ENCODE measurements at regions of chr15 and their contacts with region 1.

Region 1: GRCh38 chr15:64622410-64623260 is 152.8 kb downstream of the RBPMS2 start:
- DNase-seq: peak; percentile 31 to 80 (median 66)
- ATAC-seq: peak; percentile 89
- H3K4me3 ChIP-seq: peak overlapping the region; percentile 46
- H3K4me3 Mint-ChIP-seq: peak overlapping the region; percentile 42 to 90 (median 80)
- H3K27ac ChIP-seq: peak overlapping the region; percentile 55
- H3K27ac Mint-ChIP-seq: peak overlapping the region; percentile 82 to 94 (median 91)
- H3K4me1 ChIP-seq: peaks cover 53 to 92% of the 10 kb centered on the region in 2 donors
- H3K4me1 Mint-ChIP-seq: peaks cover 72 to 98% (median 93%) of the 10 kb centered on the region in 7 donors
- H3K27me3 ChIP-seq: no peaks in the 10 kb centered on the region
- H3K27me3 Mint-ChIP-seq: no peaks in the 10 kb centered on the region

Region 2: GRCh38 chr15:64582202-64582601 is 40.4 kb before region 1 on chr15:
- CTCF ChIA-PET with region 1: no interaction called
- POLR2A ChIA-PET with region 1: no interaction called
- intact Hi-C with region 1: loop called (anchors 5 kb)
- DNase-seq: no peak
- ATAC-seq: peak; percentile 41
- H3K4me3 ChIP-seq: no peak overlapping the region
- H3K4me3 Mint-ChIP-seq: peak overlapping the region in 8 of 10 donors; percentile 2 to 86 (median 28)
- H3K27ac ChIP-seq: no peak overlapping the region
- H3K27ac Mint-ChIP-seq: peak overlapping the region in 8 of 9 donors; percentile 4 to 93 (median 68)
- H3K4me1 ChIP-seq: peaks cover 0 to 28% of the 10 kb centered on the region in 2 donors
- H3K4me1 Mint-ChIP-seq: peaks cover 35 to 75% (median 65%) of the 10 kb centered on the region in 7 donors
- H3K27me3 ChIP-seq: no peaks in the 10 kb centered on the region
- H3K27me3 Mint-ChIP-seq: no peaks in the 10 kb centered on the region

Region 3: GRCh38 chr15:64596701-64597476 is 25.7 kb before region 1 on chr15:
- CTCF ChIA-PET with region 1: no interaction called
- POLR2A ChIA-PET with region 1: interaction called, 4 read pairs
- intact Hi-C with region 1: loop called in 1 of 2 experiments (anchors 2 kb)
- DNase-seq: peak in 6 of 9 donors; percentile 51 to 68 (median 62)
- ATAC-seq: peak; percentile 81
- H3K4me3 ChIP-seq: peak overlapping the region; percentile 47
- H3K4me3 Mint-ChIP-seq: peak overlapping the region; percentile 77 to 92 (median 87)
- H3K27ac ChIP-seq: peak overlapping the region; percentile 73
- H3K27ac Mint-ChIP-seq: peak overlapping the region; percentile 89 to 99 (median 94)
- H3K4me1 ChIP-seq: peaks cover 6 to 41% of the 10 kb centered on the region in 2 donors
- H3K4me1 Mint-ChIP-seq: peaks cover 41 to 84% (median 69%) of the 10 kb centered on the region in 7 donors
- H3K27me3 ChIP-seq: no peaks in the 10 kb centered on the region
- H3K27me3 Mint-ChIP-seq: no peaks in the 10 kb centered on the region

Region 4: GRCh38 chr15:64604319-64604718 is 18.3 kb before region 1 on chr15:
- CTCF ChIA-PET with region 1: no interaction called
- POLR2A ChIA-PET with region 1: no interaction called
- intact Hi-C with region 1: loop called in 1 of 2 experiments (anchors 2 kb)
- DNase-seq: no peak
- ATAC-seq: no peak
- H3K4me3 ChIP-seq: no peak overlapping the region
- H3K4me3 Mint-ChIP-seq: peak overlapping the region in 3 of 10 donors; percentile 17 to 66 (median 46)
- H3K27ac ChIP-seq: no peak overlapping the region
- H3K27ac Mint-ChIP-seq: peak overlapping the region in 8 of 9 donors; percentile 60 to 94 (median 83)
- H3K4me1 ChIP-seq: peaks cover 9 to 37% of the 10 kb centered on the region in 2 donors
- H3K4me1 Mint-ChIP-seq: peaks cover 40 to 75% (median 60%) of the 10 kb centered on the region in 7 donors
- H3K27me3 ChIP-seq: no peaks in the 10 kb centered on the region
- H3K27me3 Mint-ChIP-seq: no peaks in the 10 kb centered on the region

Region 5: GRCh38 chr15:64634576-64635498 is 12.2 kb after region 1 on chr15:
- CTCF ChIA-PET with region 1: interaction called, 3 read pairs
- POLR2A ChIA-PET with region 1: interaction called, 4 read pairs
- intact Hi-C with region 1: loop called (anchors 1 kb)
- DNase-seq: peak in 1 of 9 donors; percentile 13
- ATAC-seq: peak; percentile 55
- H3K4me3 ChIP-seq: peak overlapping the region; percentile 5
- H3K4me3 Mint-ChIP-seq: peak overlapping the region; percentile 51 to 74 (median 68)
- H3K27ac ChIP-seq: peak overlapping the region; percentile 47
- H3K27ac Mint-ChIP-seq: peak overlapping the region; percentile 37 to 87 (median 82)
- H3K4me1 ChIP-seq: peaks cover 50 to 53% of the 10 kb centered on the region in 2 donors
- H3K4me1 Mint-ChIP-seq: peaks cover 51 to 86% (median 72%) of the 10 kb centered on the region in 7 donors
- H3K27me3 ChIP-seq: no peaks in the 10 kb centered on the region
- H3K27me3 Mint-ChIP-seq: no peaks in the 10 kb centered on the region